AG04449 (cell line): ENCODE measurements at regions of chr1 and their contacts with region 1.

Region 1: DNA sequence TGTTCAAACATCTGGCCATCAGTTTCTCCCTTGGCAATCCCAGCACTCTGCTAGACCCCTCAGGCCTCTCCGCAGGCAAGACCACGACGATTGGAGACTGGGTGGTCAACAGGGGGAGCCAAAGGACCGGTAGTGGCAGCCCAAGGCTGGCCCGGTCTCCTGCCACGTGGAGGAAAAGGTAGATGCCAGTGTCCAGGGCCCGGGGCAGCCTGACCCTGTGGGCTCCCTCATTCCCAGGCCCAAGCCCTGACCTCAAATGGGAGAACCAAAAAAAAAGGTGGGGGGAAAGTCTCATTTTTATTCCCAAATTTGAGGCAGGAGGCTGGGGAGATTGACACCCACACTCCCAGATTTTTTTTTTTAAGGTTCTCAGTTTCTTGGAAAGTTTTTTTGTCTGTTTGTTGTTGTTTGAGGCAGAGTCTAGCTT is 24.8 kb downstream of the S100A6 start:
- DNase-seq: no peak
- H3K4me3 ChIP-seq: no peak overlapping the region
- CTCF ChIP-seq: peak; percentile 95

Region 2: GRCh38 chr1:153494976-153495535 is 15.9 kb before region 1 on chr1:
- CTCF ChIA-PET with region 1: interaction called, 39 read pairs
- POLR2A ChIA-PET with region 1: interaction called, 3 read pairs
- DNase-seq: no peak
- H3K4me3 ChIP-seq: no peak overlapping the region
- CTCF ChIP-seq: peak; percentile 86

Region 3: GRCh38 chr1:153545067-153546055 is 34.4 kb after region 1 on chr1 and contains the start of gene S100A4:
- CTCF ChIA-PET with region 1: interaction called, 17 read pairs
- POLR2A ChIA-PET with region 1: no interaction called
- DNase-seq: peak; percentile 65
- H3K4me3 ChIP-seq: peak within 1 kb of the TSS; percentile 56
- CTCF ChIP-seq: no peak

Region 4: DNA sequence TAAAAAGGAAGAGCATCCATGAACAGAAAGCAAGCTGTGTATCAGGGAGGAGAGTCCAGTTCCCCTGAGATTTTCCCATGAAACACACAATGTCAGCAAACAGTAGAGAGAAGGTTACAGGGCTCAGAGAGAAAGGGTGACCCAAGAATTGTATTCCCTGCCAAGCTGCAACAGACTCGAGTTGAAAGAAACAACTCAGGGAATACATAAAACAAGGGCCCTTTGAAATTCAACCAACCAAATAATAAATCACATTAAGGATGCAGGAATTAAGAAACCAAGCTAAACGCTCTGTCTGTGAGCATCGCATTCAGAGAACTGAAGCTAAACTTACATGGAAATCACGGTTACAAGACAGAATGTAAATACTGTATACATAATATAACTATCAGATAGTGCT is 81.8 kb after region 1 on chr1:
- CTCF ChIA-PET with region 1: interaction called, 13 read pairs
- POLR2A ChIA-PET with region 1: interaction called, 3 read pairs
- DNase-seq: no peak
- H3K4me3 ChIP-seq: no peak overlapping the region
- CTCF ChIP-seq: no peak

Region 5: GRCh38 chr1:153617675-153618074 is 106.7 kb after region 1 on chr1:
- CTCF ChIA-PET with region 1: interaction called, 93 read pairs
- POLR2A ChIA-PET with region 1: interaction called, 3 read pairs
- DNase-seq: no peak
- H3K4me3 ChIP-seq: no peak overlapping the region
- CTCF ChIP-seq: peak; percentile 81

Region 6: GRCh38 chr1:153639280-153639679 is 128.3 kb after region 1 on chr1:
- CTCF ChIA-PET with region 1: interaction called, 16 read pairs
- POLR2A ChIA-PET with region 1: interaction called, 6 read pairs
- DNase-seq: no peak
- H3K4me3 ChIP-seq: no peak overlapping the region
- CTCF ChIP-seq: no peak